Activated naive CD4-positive, alpha-beta T cell treated with anti-CD3 and anti-CD28 coated beads for 36 hours (primary cell): ENCODE measurements at regions of chr12 and their contacts with region 1.

Region 1: GRCh38 chr12:106774005-106774807 is at the start of gene RIC8B:
- DNase-seq: peak; percentile 92
- H3K4me3 Mint-ChIP-seq: peak within 1 kb of the TSS; percentile 99
- H3K27ac Mint-ChIP-seq: peak within 1 kb of the TSS; percentile 97
- H3K4me1 Mint-ChIP-seq: peaks cover 22% of the 10 kb centered on the region
- H3K27me3 Mint-ChIP-seq: no peaks in the 10 kb centered on the region
- total RNA-seq, gene RIC8B: 7.3 to 8.1 TPM

Region 2: DNA sequence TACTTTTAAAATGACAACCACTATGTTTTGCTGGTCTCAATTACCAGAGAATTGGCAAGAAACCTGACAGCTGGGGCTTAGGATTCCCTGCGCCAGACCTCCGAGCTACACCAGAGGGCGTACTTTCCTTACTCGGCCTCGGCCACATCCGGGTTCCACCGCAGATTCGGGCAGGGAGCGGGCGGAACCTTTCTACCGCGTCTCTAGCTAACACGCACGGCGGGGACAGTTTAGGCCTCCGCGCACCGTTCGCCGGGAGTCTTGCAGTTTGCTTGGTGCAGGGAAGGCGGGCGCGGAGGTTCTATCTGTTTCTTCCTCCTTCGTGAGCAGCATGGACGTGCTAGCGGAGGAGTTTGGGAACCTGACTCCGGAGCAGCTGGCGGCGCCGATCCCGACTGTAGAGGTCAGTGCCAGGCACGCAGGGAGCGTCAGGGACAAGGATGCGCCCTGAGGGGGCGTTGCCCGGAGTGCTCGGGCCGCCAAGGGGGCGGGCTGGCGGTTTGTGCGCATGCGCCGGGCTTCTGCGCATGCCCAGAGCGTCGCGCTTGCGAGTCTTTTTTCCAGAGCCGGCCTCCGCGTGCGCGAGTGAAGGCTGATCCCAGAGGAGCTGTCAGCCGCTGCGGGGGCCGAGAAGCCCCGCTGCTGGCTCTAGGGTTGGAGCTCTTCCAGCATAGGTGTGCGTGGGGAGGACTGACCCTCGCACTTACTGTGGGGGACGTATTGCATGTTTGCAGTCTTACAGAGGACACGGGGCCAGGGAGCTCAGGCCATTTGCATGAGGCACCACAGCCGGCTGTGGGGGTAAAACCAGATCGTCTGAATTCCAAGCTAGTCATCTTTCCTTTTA is 416.4 kb before region 1 on chr12 and contains the start of gene POLR3B:
- CTCF ChIA-PET with region 1: interaction called, 4 read pairs
- intact Hi-C with region 1: loop called (anchors 5 kb)
- DNase-seq: peak; percentile 97
- H3K4me3 Mint-ChIP-seq: peak within 1 kb of the TSS; percentile 92
- H3K27ac Mint-ChIP-seq: peak within 1 kb of the TSS; percentile 89
- H3K4me1 Mint-ChIP-seq: peaks cover 11% of the 10 kb centered on the region
- H3K27me3 Mint-ChIP-seq: no peaks in the 10 kb centered on the region
- total RNA-seq, gene POLR3B: 6.4 to 6.8 TPM

Region 3: DNA sequence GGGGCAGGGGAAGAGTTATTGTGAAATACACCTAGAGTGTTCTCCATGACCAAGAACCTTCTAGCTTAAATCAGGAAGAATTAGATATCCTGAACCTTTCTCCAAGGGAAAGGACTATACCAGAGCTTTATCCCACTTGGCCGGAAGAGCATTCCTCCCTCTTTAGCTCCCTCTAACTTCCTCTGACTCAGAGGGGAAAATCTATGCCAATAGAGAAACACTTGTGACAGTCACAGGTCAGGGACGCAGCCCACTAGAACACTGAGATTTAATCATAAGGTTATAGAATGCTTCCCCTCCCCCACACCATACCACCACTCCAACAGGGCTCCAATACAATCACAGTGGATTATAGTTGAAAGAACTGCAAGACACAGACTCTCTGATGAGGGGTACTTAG is 246.8 kb before region 1 on chr12:
- CTCF ChIA-PET with region 1: no interaction called
- intact Hi-C with region 1: no loop called
- DNase-seq: no peak
- H3K4me3 Mint-ChIP-seq: no peak overlapping the region
- H3K27ac Mint-ChIP-seq: no peak overlapping the region
- H3K4me1 Mint-ChIP-seq: no peaks in the 10 kb centered on the region
- H3K27me3 Mint-ChIP-seq: peaks cover 4% of the 10 kb centered on the region

Region 4: DNA sequence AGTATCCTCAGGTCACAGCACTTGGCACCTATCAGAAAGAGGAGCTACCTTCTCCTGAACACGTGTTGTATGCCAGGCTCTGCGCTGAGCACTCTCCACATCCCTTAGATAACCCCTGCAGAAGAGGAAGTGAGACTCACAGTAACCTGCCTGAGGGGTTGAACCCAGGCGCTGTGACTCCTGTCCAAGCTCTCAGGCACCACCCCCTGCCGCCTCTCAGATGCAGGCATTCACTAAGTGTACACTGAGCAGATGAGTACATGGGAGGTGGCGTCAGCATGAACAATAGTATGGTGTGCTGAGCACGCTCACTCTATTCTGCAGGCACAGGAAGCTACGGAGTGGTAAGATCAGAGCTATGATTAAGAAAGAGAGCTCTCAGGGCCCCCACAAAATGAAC is 20.7 kb before region 1 on chr12:
- CTCF ChIA-PET with region 1: no interaction called
- intact Hi-C with region 1: loop called (anchors 1 kb)
- DNase-seq: peak; percentile 90
- H3K4me3 Mint-ChIP-seq: peak overlapping the region; percentile 46
- H3K27ac Mint-ChIP-seq: peak overlapping the region; percentile 68
- H3K4me1 Mint-ChIP-seq: peaks cover 30% of the 10 kb centered on the region
- H3K27me3 Mint-ChIP-seq: no peaks in the 10 kb centered on the region

Region 5: DNA sequence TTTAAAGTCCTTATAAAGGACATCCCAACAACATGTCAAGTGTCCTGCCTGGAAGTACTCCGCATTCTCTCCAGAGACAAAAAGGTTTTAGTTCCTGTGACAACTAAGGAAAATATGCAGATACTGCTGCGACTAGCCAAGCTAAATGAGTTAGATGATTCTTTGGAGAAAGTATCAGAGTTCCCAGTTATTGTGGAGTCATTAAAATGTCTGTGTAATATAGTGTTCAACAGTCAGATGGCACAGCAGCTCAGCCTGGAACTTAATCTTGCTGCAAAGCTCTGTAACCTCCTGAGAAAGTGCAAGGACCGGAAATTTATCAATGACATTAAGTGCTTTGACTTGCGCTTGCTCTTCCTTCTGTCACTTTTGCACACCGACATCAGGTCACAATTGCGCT is 40.5 kb after region 1 on chr12:
- CTCF ChIA-PET with region 1: no interaction called
- intact Hi-C with region 1: no loop called
- DNase-seq: no peak
- H3K4me3 Mint-ChIP-seq: no peak overlapping the region
- H3K27ac Mint-ChIP-seq: no peak overlapping the region
- H3K4me1 Mint-ChIP-seq: no peaks in the 10 kb centered on the region
- H3K27me3 Mint-ChIP-seq: no peaks in the 10 kb centered on the region

Region 6: DNA sequence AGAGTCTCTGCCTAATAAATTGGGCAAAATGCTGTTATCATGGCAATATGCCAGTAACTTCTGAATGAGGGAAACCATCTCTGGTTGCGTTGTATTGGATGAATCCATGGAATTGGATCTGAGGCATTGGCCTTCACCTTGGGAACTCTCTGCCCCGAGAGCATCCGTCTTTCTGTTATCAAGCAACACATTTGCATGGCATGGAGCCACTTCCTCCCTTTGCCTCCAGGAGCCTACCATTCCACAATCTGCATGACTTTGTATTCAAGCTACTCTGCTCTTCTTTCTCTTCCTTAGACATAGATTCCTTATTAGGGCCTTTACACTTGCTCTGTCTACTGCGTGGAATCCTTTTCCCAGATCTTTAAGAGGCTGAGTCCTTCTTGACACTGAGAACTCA is 57.5 kb after region 1 on chr12:
- CTCF ChIA-PET with region 1: no interaction called
- intact Hi-C with region 1: no loop called
- DNase-seq: no peak
- H3K4me3 Mint-ChIP-seq: no peak overlapping the region
- H3K27ac Mint-ChIP-seq: no peak overlapping the region
- H3K4me1 Mint-ChIP-seq: peaks cover 7% of the 10 kb centered on the region
- H3K27me3 Mint-ChIP-seq: no peaks in the 10 kb centered on the region

Region 7: GRCh38 chr12:106955377-106956047 is 181.3 kb after region 1 on chr12 and contains the start of gene TMEM263:
- CTCF ChIA-PET with region 1: no interaction called
- intact Hi-C with region 1: loop called (anchors 2 kb)
- DNase-seq: peak; percentile 87
- H3K4me3 Mint-ChIP-seq: peak within 1 kb of the TSS; percentile 99
- H3K27ac Mint-ChIP-seq: peak within 1 kb of the TSS; percentile 91
- H3K4me1 Mint-ChIP-seq: peaks cover 14% of the 10 kb centered on the region
- H3K27me3 Mint-ChIP-seq: no peaks in the 10 kb centered on the region
- total RNA-seq, gene TMEM263: 29.1 to 30.4 TPM